BJ (cell line): ENCODE measurements at regions of chr16 and their contacts with region 1.

Region 1: GRCh38 chr16:48623304-48624016 is 13.5 kb upstream of the N4BP1 start:
- DNase-seq: no peak
- H3K4me3 ChIP-seq: peak overlapping the region; percentile 45
- H3K27me3 ChIP-seq: peaks cover 4% of the 10 kb centered on the region; the same call in 1 of the 2 replicates
- CTCF ChIP-seq: peak; percentile 100

Region 2: GRCh38 chr16:48164907-48165726 is 458.3 kb before region 1 on chr16:
- CTCF ChIA-PET with region 1: interaction called, 32 read pairs
- POLR2A ChIA-PET with region 1: no interaction called
- DNase-seq: no peak
- H3K4me3 ChIP-seq: no peak overlapping the region
- H3K27me3 ChIP-seq: no peaks in the 10 kb centered on the region; the same call in 1 of the 2 replicates
- CTCF ChIP-seq: peak; percentile 87

Region 3: GRCh38 chr16:48353565-48354163 is 269.8 kb before region 1 on chr16:
- CTCF ChIA-PET with region 1: interaction called, 36 read pairs
- POLR2A ChIA-PET with region 1: interaction called, 3 read pairs
- DNase-seq: no peak
- H3K4me3 ChIP-seq: no peak overlapping the region
- H3K27me3 ChIP-seq: no peaks in the 10 kb centered on the region
- CTCF ChIP-seq: peak; percentile 88

Region 4: DNA sequence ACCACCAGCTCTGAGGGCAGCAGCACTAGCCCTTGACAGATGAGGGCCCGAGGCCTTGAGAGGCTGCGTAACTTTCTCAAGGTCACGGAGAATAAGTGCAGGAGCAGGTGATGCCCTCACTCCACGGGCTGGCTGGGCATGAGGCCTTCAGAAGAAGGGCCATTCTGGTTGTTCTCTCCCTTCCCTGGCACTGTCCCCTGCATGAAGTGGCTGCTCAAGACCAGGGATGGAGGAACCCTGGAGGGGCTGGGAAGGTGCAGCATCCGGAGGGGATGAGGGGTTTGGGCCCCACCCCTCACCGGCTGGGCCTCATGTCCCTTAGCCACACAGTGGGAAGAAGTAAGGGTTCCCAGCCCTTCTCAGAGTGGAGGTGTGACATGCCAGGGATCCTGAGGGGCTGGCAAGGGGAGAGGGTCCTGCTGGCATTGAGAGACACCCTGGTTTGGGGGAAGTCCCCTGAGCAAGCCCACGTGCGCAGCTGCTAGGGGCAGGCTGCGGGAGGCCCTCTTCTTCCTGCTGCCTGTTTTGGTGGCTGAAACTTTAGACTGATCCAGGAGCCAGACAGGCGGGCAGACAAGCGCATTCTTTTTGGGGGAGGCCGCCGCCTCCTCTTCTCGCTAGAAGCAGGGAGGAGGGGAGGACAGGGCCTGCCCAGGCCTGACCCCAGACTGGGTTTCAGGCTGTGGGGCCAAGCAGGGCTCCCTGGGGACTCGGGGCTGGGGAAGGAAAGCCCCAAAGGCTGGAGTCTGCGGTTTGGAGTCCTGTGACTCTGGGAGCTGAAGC is 87.4 kb before region 1 on chr16:
- CTCF ChIA-PET with region 1: interaction called, 21 read pairs
- POLR2A ChIA-PET with region 1: no interaction called
- DNase-seq: no peak
- H3K4me3 ChIP-seq: no peak overlapping the region
- H3K27me3 ChIP-seq: no peaks in the 10 kb centered on the region
- CTCF ChIP-seq: no peak

Region 5: GRCh38 chr16:48556913-48557351 is 66.5 kb before region 1 on chr16:
- CTCF ChIA-PET with region 1: interaction called, 12 read pairs
- POLR2A ChIA-PET with region 1: no interaction called
- DNase-seq: no peak
- H3K4me3 ChIP-seq: no peak overlapping the region
- H3K27me3 ChIP-seq: no peaks in the 10 kb centered on the region
- CTCF ChIP-seq: no peak

Region 6: GRCh38 chr16:48647794-48648193 is 24.3 kb after region 1 on chr16:
- CTCF ChIA-PET with region 1: no interaction called
- POLR2A ChIA-PET with region 1: no interaction called
- DNase-seq: no peak
- H3K4me3 ChIP-seq: no peak overlapping the region
- H3K27me3 ChIP-seq: no peaks in the 10 kb centered on the region
- CTCF ChIP-seq: no peak

Region 7: GRCh38 chr16:48824271-48824670 is 200.8 kb after region 1 on chr16:
- CTCF ChIA-PET with region 1: no interaction called
- POLR2A ChIA-PET with region 1: no interaction called
- DNase-seq: no peak
- H3K4me3 ChIP-seq: no peak overlapping the region
- H3K27me3 ChIP-seq: no peaks in the 10 kb centered on the region
- CTCF ChIP-seq: no peak